CD14-positive monocyte (primary cell): ENCODE measurements at regions of chr9 and their contacts with region 1.

Region 1: DNA sequence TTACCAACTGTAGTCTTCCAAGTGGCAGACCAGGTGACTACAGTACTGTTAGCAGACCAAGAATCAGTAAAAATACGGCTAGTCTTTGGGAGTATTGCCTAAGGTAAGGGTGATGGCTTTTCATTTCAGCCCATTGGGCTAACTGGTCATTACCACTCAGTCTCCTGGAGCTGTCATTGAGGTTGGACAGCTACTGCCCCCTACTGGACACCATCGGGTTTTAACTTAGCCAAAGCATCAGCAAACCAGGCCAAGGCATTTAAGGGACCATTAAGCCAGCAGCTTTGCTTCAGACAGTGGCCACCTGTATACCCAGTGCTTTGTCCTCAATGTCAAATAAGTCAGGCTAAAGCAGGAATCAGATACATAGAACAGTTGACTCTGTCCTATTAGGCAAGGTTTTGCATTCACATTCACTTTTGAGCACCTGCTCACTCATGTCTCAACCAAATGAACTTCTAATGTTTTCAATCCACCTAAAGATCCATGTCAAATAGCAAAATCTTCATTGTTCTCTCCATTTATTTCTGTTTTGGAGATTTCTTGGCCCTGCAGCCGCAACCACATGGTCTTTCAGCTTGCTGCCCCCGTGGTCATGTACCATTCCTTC is 117.2 kb downstream of the INVS start:
- DNase-seq: peak; percentile 45 to 60 (median 58)
- H3K4me3 ChIP-seq: no peak overlapping the region
- H3K4me3 Mint-ChIP-seq: no peak overlapping the region
- H3K27ac ChIP-seq: no peak overlapping the region
- H3K27ac Mint-ChIP-seq: no peak overlapping the region
- H3K4me1 ChIP-seq: no peaks in the 10 kb centered on the region
- H3K4me1 Mint-ChIP-seq: peaks cover 6% of the 10 kb centered on the region
- H3K27me3 ChIP-seq: no peaks in the 10 kb centered on the region
- H3K27me3 Mint-ChIP-seq: peaks cover 0 to 1% (median 0%) of the 10 kb centered on the region in 3 donors
- CTCF ChIP-seq: peak; percentile 85

Region 2: GRCh38 chr9:100028201-100028784 is 188.0 kb before region 1 on chr9:
- intact Hi-C with region 1: loop called in 1 of 2 experiments (anchors 10 kb)
- DNase-seq: peak; percentile 42 to 64 (median 63)
- H3K4me3 ChIP-seq: no peak overlapping the region
- H3K4me3 Mint-ChIP-seq: no peak overlapping the region
- H3K27ac ChIP-seq: peak overlapping the region in 1 of 2 donors; percentile 25
- H3K27ac Mint-ChIP-seq: peak overlapping the region in 3 of 7 donors; percentile 35 to 68 (median 37)
- H3K4me1 ChIP-seq: peaks cover 6 to 23% of the 10 kb centered on the region in 2 donors
- H3K4me1 Mint-ChIP-seq: peaks cover 25% of the 10 kb centered on the region
- H3K27me3 ChIP-seq: no peaks in the 10 kb centered on the region
- H3K27me3 Mint-ChIP-seq: no peaks in the 10 kb centered on the region
- CTCF ChIP-seq: peak; percentile 90